ENCODE measurements at regions of chr13 and their contacts with region 1.

Region 1: DNA sequence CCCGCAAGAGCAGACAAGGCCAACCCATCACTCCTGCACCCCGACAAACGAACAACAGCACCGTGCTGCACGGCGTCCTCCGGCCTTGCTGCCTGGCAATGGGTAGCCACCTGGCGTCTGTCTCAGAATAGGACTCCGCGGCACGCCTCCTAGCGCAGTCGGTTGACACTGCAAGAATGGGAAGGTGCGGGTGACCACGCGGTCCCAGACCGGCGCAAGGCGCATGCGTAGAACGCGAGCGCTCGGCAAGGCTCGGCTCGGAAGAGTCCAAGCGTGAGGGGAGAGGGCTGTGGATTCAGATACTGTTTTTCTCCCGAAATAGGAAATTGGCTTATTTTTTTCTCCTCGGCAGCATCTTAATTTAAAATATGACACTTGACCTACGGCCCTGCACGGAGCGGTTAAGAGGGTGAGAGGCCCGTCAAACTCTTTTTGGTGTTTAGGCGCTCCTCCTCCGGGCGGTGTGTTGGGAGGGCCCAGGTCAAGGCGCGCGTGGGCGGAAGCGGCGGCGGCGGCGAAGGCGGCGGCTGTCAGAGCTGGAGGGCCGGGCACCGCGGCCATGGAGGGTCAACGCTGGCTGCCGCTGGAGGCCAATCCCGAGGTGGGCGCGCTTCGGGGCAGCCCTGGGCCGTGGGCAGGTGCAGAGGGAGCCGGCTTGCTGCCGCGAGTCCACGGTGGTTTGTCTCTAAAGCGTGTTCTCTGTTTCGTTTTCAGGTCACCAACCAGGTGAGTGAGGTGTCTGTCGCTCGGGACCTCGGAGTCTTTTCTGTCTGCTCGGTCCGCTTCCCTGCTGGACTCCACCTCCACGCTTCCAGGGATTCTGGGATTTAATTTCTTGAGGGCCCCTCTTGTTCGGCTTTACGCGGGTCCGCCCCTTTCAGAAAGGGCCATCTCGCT is at the start of gene UCHL3:
- DNase-seq: peak; percentile 96 to 98
- ATAC-seq: peak; percentile 97 to 99 (median 98)
- H3K4me3 ChIP-seq: peak within 1 kb of the TSS; percentile 56 to 96 (median 83)
- H3K27ac ChIP-seq: peak within 1 kb of the TSS; percentile 41 to 98 (median 79)
- H3K4me1 ChIP-seq: peaks cover 0 to 28% (median 11%) of the 10 kb centered on the region in 9 donors
- H3K27me3 ChIP-seq: no peaks in the 10 kb centered on the region
- CTCF ChIP-seq: peak; percentile 66 to 97 (median 86)
- total RNA-seq, gene UCHL3: 17.1 to 28.1 (median 23.2) TPM

Region 2: GRCh38 chr13:75365724-75366173 is 183.8 kb before region 1 on chr13:
- intact Hi-C with region 1: loop called in 5 of 10 experiments (anchors 5 to 10 kb)
- DNase-seq: no peak
- ATAC-seq: peak; percentile 10 to 84 (median 66)
- H3K4me3 ChIP-seq: peak overlapping the region in 6 of 10 donors; percentile 2 to 33 (median 18)
- H3K27ac ChIP-seq: peak overlapping the region; percentile 45 to 86 (median 76)
- H3K4me1 ChIP-seq: peaks cover 9 to 85% (median 40%) of the 10 kb centered on the region in 9 donors
- H3K27me3 ChIP-seq: no peaks in the 10 kb centered on the region
- CTCF ChIP-seq: peak in 1 of 9 donors; percentile 19

Region 3: GRCh38 chr13:75372517-75372916 is 177.0 kb before region 1 on chr13:
- intact Hi-C with region 1: loop called in 6 of 10 experiments (anchors 2 to 10 kb)
- DNase-seq: peak in 1 of 2 donors; percentile 52
- ATAC-seq: peak in 6 of 8 donors; percentile 33 to 55 (median 48)
- H3K4me3 ChIP-seq: peak overlapping the region in 1 of 10 donors; percentile 9
- H3K27ac ChIP-seq: peak overlapping the region in 8 of 10 donors; percentile 38 to 81 (median 62)
- H3K4me1 ChIP-seq: peaks cover 0 to 67% (median 40%) of the 10 kb centered on the region in 9 donors
- H3K27me3 ChIP-seq: no peaks in the 10 kb centered on the region
- CTCF ChIP-seq: peak; percentile 54 to 86 (median 81)

Region 4: DNA sequence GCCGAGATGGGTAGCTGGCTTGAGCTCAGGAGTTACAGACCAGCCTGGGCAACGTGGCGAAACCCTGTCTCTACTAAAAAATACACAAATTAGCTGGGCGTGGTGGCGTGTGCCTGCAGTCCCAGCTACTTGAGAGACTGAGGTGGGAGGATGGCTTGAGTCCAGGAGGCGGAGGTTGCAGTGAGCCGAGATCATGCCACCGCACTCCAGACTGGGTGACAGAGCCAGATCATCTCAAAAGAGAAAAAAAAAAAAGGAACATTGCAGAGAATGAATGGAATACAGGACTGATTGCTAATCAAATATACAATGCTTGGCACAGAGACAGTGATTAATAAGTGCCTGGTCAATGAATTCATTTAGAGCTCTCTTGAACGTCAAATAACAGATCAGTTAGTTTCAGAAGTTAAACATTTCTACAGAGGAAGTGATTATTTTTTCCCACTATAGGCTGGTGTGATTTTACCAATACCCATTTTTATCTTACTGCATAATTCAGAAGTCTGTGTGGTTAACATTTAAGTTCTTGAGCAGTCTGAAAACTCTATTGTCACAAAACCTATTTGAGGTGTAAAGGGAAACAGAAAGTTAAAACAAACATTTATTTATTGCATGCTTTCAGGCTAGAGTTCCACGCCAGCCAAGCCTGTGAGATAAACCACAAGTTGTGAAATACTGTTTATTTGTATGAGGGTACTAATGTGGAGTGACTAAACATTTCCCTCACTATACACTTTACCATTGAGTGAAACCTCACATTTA is 59.8 kb before region 1 on chr13:
- intact Hi-C with region 1: loop called in 4 of 10 experiments (anchors 5 kb)
- DNase-seq: no peak
- ATAC-seq: no peak
- H3K4me3 ChIP-seq: no peak overlapping the region
- H3K27ac ChIP-seq: no peak overlapping the region
- H3K4me1 ChIP-seq: peaks cover 0 to 11% (median 0%) of the 10 kb centered on the region in 9 donors
- H3K27me3 ChIP-seq: peaks cover 0 to 5% (median 0%) of the 10 kb centered on the region in 7 donors
- CTCF ChIP-seq: no peak

Region 5: GRCh38 chr13:75537401-75538365 is 11.8 kb before region 1 on chr13 and contains the start of gene COMMD6:
- intact Hi-C with region 1: loop called in 1 of 10 experiments (anchors 1 kb)
- DNase-seq: peak; percentile 75 to 80
- ATAC-seq: peak; percentile 94 to 98 (median 97)
- H3K4me3 ChIP-seq: peak within 1 kb of the TSS; percentile 26 to 89 (median 80)
- H3K27ac ChIP-seq: peak within 1 kb of the TSS; percentile 18 to 91 (median 82)
- H3K4me1 ChIP-seq: peaks cover 0 to 30% (median 15%) of the 10 kb centered on the region in 9 donors
- H3K27me3 ChIP-seq: no peaks in the 10 kb centered on the region
- CTCF ChIP-seq: peak; percentile 8 to 70 (median 57)
- total RNA-seq, gene COMMD6: 96.5 to 138 (median 124) TPM

Region 6: GRCh38 chr13:76129305-76130000 is 579.9 kb after region 1 on chr13:
- intact Hi-C with region 1: no loop called
- DNase-seq: no peak
- ATAC-seq: peak in 3 of 8 donors; percentile 34 to 53 (median 52)
- H3K4me3 ChIP-seq: no peak overlapping the region
- H3K27ac ChIP-seq: no peak overlapping the region
- H3K4me1 ChIP-seq: peaks cover 0 to 9% (median 0%) of the 10 kb centered on the region in 9 donors
- H3K27me3 ChIP-seq: no peaks in the 10 kb centered on the region
- CTCF ChIP-seq: no peak

Measured in heart right ventricle (tissue), 16 donors.